ENCODE measurements at regions of chr20 and their contacts with region 1.

Region 1: DNA sequence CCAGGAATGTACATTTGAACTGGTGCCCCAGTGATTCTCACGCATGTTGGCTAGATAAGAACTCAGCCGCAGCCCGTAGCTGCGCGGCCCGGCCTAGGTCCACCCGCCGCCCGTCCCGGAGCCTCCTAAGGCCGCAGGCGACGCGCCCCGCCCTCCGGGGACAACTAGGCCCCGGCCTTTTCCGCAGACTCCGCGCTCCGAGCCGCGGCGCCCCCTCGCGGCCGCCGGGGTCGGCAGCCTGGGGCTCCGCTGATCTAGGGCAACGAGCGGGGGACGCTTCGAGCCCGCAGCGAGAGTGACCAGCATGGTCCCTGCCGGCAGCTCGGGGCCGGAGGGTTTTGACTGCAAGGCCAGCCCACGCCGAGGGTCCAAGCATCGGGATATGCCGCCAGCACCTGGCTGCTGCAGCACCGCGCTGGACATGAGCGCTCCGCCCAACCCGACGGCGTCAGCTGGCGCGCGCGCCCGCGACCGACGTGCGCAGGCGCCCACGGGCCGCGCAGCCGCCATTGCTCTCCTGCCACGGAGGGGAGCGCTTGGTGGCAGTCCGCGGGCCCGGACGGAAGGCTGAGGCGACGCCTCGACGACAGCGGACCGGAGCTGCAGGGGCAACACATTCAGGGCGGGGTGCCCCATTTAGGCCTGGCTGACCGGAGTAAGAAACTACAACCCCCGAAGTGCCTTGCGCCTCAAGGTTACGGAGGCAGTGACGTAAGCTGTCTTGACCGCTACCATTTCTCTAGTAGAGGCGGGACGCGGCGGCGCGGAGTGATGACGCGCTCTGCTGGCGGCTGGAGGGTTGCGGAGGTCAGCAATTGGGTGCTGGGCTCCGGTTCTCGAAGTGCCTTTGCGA is at the start of gene AP5S1:
- DNase-seq: peak; percentile 95
- H3K4me3 Mint-ChIP-seq: peak within 1 kb of the TSS; percentile 85
- H3K27ac Mint-ChIP-seq: peak within 1 kb of the TSS; percentile 89
- H3K4me1 Mint-ChIP-seq: peaks cover 57% of the 10 kb centered on the region
- H3K27me3 Mint-ChIP-seq: no peaks in the 10 kb centered on the region
- total RNA-seq, gene AP5S1: 12.7 to 15.5 TPM

Region 2: DNA sequence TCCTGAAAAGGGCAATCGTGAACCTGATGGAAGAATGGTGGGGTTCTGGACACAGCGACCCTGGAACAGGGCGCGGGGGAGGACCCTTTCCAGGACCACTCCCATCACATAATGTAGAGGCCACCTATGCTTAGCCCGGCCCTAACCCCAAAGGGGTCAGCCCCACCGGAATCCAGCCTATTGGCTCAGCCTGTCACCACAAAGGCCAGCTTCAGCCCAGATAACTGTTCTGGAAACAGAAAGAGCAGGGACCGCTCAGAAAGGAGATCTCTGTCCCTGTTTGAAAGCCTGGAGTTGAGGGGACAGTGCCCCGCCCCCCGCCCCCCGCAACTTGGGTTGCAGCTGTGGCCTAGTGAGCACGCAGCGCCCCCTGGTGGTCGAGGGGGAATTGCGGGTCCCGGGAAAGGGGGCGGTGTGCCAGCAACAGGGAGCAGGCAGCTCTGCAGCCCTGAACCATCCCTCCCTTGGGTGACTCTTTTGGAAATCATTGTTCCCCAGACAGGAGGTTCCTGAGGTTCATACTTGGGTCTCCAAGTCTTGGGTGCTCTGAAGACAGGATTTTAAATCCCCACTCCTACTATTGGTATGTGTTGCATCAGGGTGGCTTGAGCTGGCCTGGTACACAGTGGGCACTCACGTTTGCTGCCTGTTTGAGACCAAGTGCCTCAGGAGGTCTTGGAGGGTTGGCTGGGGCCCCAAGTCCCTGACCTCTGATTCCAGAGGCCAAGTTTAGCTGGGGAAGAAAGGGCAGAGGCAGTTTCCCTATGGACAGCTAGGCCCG is 109.4 kb before region 1 on chr20:
- CTCF ChIA-PET with region 1: no interaction called
- POLR2A ChIA-PET with region 1: no interaction called
- DNase-seq: peak; percentile 76
- H3K4me3 Mint-ChIP-seq: no peak overlapping the region
- H3K27ac Mint-ChIP-seq: no peak overlapping the region
- H3K4me1 Mint-ChIP-seq: peaks cover 9% of the 10 kb centered on the region
- H3K27me3 Mint-ChIP-seq: peaks cover 8% of the 10 kb centered on the region

Region 3: DNA sequence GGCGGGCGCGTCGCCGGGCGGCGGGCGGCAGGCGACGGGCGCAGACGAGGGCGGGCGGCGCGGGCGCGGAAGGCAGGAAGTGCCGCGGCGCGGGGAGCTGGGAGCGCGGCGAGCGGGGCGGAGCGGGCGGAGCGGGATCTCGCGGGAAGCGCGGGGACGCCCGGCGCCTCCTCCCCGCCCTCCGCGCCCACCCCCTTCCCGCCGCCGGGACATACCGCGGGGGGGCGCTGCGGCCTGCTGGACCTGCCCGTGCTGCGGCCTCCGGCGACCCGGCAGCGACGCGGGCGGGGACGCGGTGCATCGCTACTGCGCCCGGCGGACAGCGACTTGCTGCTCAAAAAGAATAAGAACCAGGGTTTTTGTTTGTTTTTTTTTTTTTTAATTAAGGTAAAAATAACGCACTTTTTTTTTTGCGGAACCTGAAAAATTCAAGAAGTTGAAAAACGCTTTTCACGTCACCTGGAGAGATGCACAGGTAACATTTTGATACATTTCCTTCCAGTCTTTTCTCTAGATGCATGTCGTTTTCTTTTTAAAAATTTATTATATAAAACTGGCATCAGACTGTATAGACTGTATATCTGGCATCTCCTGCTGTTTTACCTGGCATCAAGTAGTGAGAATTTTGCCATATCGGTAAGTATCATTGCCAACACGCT is 33.5 kb before region 1 on chr20 and contains the start of gene CENPB:
- CTCF ChIA-PET with region 1: interaction called, 98 read pairs
- POLR2A ChIA-PET with region 1: interaction called, 90 read pairs
- DNase-seq: peak; percentile 92
- H3K4me3 Mint-ChIP-seq: peak within 1 kb of the TSS; percentile 81
- H3K27ac Mint-ChIP-seq: peak within 1 kb of the TSS; percentile 77
- H3K4me1 Mint-ChIP-seq: peaks cover 45% of the 10 kb centered on the region
- H3K27me3 Mint-ChIP-seq: no peaks in the 10 kb centered on the region
- total RNA-seq, gene CENPB: 67.0 to 68.0 TPM

Region 4: DNA sequence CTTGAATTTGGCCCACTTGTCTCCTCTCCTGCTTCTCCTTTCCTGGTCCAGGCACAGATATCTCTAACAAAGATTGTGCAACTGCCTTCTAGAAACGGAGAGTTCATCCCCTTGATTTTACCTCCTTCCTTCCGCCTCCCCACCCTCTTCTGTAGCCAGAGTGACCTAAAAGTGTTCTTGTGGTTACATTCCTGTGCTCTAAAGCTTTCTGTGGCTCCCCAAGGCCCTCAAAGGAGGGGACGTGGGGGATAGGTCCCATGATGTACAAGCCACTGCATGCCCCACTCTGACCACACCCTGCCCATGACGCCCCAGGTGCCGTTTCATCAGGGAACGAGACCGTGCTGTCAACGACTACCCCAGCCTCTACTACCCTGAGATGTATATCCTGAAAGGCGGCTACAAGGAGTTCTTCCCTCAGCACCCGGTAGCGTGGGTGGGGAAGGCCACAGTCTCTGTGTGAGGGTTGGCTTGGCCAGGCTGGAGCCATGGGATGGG is 16.0 kb before region 1 on chr20:
- CTCF ChIA-PET with region 1: interaction called, 30 read pairs
- POLR2A ChIA-PET with region 1: interaction called, 12 read pairs
- DNase-seq: no peak
- H3K4me3 Mint-ChIP-seq: no peak overlapping the region
- H3K27ac Mint-ChIP-seq: peak overlapping the region; percentile 72
- H3K4me1 Mint-ChIP-seq: peaks cover 85% of the 10 kb centered on the region
- H3K27me3 Mint-ChIP-seq: no peaks in the 10 kb centered on the region

Region 5: DNA sequence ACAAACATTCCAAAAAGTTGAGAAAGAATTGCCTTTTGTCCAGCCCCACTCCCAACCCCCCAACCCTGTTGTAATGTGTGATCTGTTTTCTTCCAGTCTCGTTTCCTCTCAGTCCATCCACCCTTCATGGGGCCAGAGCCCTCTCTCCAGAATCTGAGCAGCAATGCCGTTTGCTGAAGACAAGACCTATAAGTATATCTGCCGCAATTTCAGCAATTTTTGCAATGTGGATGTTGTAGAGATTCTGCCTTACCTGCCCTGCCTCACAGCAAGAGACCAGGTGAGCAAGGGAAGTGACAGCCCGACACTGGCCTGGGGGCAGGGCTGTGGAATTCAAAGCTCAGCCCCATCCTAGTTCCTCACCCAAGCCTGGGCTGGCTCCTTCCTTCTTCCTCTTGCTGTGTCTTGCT is 34.2 kb after region 1 on chr20:
- CTCF ChIA-PET with region 1: interaction called, 31 read pairs
- POLR2A ChIA-PET with region 1: interaction called, 6 read pairs
- DNase-seq: no peak
- H3K4me3 Mint-ChIP-seq: no peak overlapping the region
- H3K27ac Mint-ChIP-seq: no peak overlapping the region
- H3K4me1 Mint-ChIP-seq: peaks cover 6% of the 10 kb centered on the region
- H3K27me3 Mint-ChIP-seq: no peaks in the 10 kb centered on the region